Activated CD4-positive, alpha-beta memory T cell treated with anti-CD3 and anti-CD28 coated beads, Interleukin-2, amount 10 ng/mL, durations not matched to agents 7 days and 5 days (primary cell): ENCODE measurements at regions of chr3 and their contacts with region 1.

Region 1: GRCh38 chr3:101803173-101803782 is 24.3 kb downstream of the NXPE3 start:
- DNase-seq: peak; percentile 55
- H3K4me3 Mint-ChIP-seq: no peak overlapping the region
- H3K27ac Mint-ChIP-seq: peak overlapping the region; percentile 15
- H3K4me1 Mint-ChIP-seq: peaks cover 16% of the 10 kb centered on the region
- H3K27me3 Mint-ChIP-seq: no peaks in the 10 kb centered on the region

Region 2: DNA sequence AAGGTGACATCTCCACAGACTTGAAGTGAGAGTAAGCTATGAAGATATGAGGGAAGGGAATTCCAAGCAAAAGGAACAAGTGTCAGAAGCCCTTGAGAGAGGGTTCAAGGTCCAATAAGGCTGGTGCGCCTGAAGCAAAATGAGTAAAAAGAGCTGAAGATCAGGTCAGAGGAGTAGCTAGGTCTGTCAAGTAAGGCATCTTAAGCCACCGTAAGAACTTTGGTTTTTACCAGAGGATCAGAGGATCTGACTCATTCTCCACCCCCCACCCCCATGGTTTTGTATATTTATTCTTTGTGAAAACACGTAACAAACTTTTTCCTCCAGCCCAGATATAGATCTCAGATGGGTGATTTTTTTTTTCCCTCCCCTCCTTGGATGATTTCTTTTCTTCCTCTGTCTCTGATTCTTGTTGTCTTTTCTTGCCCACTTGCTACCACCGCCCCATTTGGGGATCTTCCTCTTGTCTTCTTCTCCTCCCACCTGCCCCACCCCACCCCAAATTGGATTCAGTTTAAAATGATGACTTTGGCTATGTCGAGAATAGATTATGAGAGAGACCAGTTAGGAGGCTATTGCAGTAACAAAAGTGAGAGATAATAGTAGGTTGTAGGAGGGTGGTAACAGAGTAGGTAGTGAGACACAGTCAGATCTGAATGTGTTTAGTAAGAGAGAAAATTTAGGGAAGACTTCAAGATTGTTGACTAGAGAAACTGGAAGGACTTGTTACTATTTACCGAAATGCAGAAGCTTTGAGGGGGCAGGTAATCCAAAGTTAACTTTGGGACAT is 235.6 kb before region 1 on chr3:
- CTCF ChIA-PET with region 1: no interaction called
- POLR2A ChIA-PET with region 1: no interaction called
- DNase-seq: peak; percentile 34
- H3K4me3 Mint-ChIP-seq: no peak overlapping the region
- H3K27ac Mint-ChIP-seq: peak overlapping the region; percentile 69
- H3K4me1 Mint-ChIP-seq: peaks cover 64% of the 10 kb centered on the region
- H3K27me3 Mint-ChIP-seq: no peaks in the 10 kb centered on the region

Region 3: DNA sequence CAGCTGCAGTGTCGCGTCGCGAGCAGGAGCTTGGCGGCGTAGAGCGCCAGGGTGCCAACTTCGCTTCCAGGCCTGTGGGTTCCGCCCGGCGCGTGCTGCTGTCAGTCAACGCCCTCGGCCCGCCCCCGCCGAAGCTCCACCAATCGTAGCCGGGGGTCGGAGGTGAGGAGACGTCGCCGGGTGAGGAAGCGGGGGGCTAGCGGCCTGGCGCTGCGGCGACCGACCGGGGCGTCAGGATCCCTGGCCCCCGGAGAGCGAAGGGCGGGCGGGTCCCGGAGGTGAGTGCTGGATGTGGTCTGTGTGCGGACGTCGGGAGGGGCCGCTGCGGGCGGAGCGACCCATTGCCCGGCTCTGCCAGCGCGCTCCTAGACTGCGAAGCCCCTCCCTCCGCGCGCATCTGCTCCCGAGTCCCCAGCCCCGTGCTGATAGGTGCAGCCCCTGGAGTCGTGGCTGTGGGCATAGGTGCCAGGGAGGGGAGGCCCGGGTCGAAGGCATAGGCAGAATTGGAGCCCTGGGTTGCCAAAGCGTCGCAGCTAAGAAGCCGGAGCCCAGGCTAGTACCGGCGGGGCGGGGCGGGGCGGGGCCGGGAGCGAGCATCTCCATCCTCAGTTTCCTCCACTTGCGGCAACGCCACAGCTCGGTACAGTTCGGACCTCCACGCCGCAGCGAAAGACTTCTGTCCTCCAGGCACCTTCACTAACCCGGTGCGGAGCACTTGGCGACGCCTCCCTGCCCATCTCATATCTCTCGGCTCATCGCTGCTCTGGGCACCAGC is 24.0 kb before region 1 on chr3 and contains the start of gene NXPE3:
- CTCF ChIA-PET with region 1: interaction called, 18 read pairs
- POLR2A ChIA-PET with region 1: no interaction called
- DNase-seq: peak; percentile 94
- H3K4me3 Mint-ChIP-seq: peak within 1 kb of the TSS; percentile 85
- H3K27ac Mint-ChIP-seq: peak within 1 kb of the TSS; percentile 87
- H3K4me1 Mint-ChIP-seq: peaks cover 46% of the 10 kb centered on the region
- H3K27me3 Mint-ChIP-seq: no peaks in the 10 kb centered on the region
- total RNA-seq, gene NXPE3: 22.4 to 23.6 TPM

Region 4: DNA sequence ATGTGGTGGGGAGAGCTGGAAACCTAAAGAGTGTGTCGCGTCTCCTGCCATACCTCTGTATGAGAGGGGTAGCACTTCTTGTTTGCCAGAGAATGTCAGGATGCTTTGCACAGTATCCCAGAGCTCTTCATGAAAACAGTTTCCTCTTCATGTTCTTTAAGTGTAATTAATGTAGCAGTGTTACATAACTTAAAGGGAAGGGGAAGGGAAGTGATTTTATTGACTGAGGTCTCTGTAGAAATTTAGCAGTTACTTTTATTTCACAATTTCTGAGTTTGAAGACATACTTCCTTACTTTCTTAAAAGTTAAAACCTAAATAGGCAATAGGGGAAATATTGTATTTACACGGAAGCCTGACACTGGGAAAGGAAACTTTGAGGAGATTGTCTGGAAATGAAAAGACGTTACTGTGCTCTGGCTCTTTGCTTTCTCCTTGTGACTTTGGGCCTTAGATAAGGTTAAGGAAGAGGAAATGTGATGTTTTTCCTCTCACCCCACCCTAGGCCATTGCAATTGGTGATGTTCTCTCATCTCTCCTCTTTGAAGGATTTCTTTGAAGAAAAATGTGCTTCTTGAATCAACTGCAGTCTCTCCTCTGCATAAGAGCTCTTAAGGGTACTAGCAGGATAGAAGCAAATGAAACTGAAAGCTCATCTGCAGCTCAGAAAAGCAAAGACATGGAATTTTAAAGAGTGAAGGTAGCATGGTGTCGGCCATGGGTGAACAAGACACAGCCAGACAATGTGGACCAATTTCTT is 18.2 kb before region 1 on chr3:
- CTCF ChIA-PET with region 1: interaction called, 18 read pairs
- POLR2A ChIA-PET with region 1: no interaction called
- DNase-seq: no peak
- H3K4me3 Mint-ChIP-seq: peak overlapping the region; percentile 23
- H3K27ac Mint-ChIP-seq: peak overlapping the region; percentile 69
- H3K4me1 Mint-ChIP-seq: peaks cover 50% of the 10 kb centered on the region
- H3K27me3 Mint-ChIP-seq: no peaks in the 10 kb centered on the region

Region 5: DNA sequence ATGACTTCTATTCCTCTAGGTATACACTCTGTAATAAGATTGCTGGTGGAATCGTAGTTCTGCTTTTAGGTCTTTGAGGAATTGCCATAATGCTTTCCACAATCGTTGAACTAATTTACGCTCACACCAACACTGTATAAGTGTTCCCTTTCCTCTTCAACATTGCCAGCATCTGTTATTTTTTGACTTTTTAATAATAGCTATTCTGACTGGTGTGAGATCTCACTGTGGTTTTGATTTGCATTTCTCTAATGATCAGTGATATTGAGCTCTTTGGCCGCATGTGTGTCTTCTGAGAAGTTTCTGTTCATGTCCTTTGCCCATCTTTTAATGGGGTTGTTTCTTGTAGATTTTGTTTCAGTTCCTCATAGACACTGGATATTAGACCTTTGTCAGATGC is 11.5 kb before region 1 on chr3:
- CTCF ChIA-PET with region 1: interaction called, 22 read pairs
- POLR2A ChIA-PET with region 1: no interaction called
- DNase-seq: no peak
- H3K4me3 Mint-ChIP-seq: no peak overlapping the region
- H3K27ac Mint-ChIP-seq: no peak overlapping the region
- H3K4me1 Mint-ChIP-seq: peaks cover 22% of the 10 kb centered on the region
- H3K27me3 Mint-ChIP-seq: no peaks in the 10 kb centered on the region

Region 6: DNA sequence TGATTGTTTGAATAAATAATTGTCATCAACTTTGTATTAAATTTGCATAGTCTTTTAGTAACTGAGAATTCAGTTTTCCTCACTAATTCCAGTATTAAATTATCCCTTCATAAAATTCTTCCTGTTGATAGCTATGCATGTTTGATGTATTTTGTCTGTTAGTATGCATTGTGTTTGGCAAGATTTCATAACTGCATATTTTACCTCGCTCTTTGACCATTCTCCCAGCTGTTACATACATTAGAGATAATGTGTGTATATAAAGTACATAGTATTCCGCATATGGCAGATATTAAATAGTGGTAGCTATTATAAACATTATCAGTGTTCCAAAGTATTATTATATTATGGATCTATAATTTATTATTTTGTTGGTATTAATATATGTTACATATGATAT is 35.4 kb after region 1 on chr3:
- CTCF ChIA-PET with region 1: no interaction called
- POLR2A ChIA-PET with region 1: no interaction called
- DNase-seq: no peak
- H3K4me3 Mint-ChIP-seq: no peak overlapping the region
- H3K27ac Mint-ChIP-seq: no peak overlapping the region
- H3K4me1 Mint-ChIP-seq: peaks cover 17% of the 10 kb centered on the region
- H3K27me3 Mint-ChIP-seq: no peaks in the 10 kb centered on the region

Region 7: GRCh38 chr3:101913173-101913572 is 109.9 kb after region 1 on chr3:
- CTCF ChIA-PET with region 1: no interaction called
- POLR2A ChIA-PET with region 1: no interaction called
- DNase-seq: no peak
- H3K4me3 Mint-ChIP-seq: no peak overlapping the region
- H3K27ac Mint-ChIP-seq: no peak overlapping the region
- H3K4me1 Mint-ChIP-seq: no peaks in the 10 kb centered on the region
- H3K27me3 Mint-ChIP-seq: peaks cover 12% of the 10 kb centered on the region

Region 8: DNA sequence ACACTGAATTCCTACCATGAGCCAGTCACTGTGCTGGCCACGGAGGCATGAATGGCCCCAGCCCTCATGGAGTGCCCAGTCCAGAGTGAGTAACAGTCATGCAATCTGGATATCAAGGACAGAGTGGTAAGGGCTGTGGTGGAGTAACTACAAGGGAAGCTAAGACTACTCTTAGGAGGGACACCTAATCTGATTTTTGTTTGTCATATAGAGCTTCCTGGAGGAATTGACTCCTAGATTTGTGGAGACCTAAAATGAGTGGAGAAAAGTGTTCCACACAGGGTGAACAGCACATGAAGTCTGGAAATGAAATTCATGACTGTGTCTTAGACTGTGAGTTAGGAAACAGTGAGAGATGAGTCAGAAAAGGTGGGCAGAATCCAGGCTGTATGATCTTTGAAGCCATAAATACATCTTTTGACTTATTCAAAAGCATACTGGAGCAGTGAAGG is 266.0 kb after region 1 on chr3:
- CTCF ChIA-PET with region 1: no interaction called
- POLR2A ChIA-PET with region 1: no interaction called
- DNase-seq: no peak
- H3K4me3 Mint-ChIP-seq: no peak overlapping the region
- H3K27ac Mint-ChIP-seq: no peak overlapping the region
- H3K4me1 Mint-ChIP-seq: peaks cover 4% of the 10 kb centered on the region
- H3K27me3 Mint-ChIP-seq: peaks cover 2% of the 10 kb centered on the region

Region 9: DNA sequence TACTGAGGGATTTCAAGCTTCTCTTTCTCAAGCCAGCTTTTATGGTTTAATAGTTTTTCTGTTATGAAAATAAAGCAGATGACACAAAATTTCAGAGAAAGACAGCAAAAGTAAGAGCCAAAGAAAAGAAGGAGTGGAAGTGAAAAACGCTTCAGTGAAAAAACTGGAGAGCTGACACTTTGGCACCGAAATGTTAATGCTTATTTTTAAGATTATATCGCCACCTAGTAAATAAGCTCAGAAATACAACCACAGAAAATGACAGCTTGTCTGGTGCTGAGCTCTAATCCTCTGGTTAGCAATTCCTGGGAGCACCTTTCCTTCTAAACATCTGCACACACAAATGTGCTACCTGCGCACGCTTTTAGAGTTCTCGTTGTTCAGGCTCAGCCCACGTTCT is 733.2 kb after region 1 on chr3:
- CTCF ChIA-PET with region 1: interaction called, 11 read pairs
- POLR2A ChIA-PET with region 1: no interaction called
- DNase-seq: no peak
- H3K4me3 Mint-ChIP-seq: no peak overlapping the region
- H3K27ac Mint-ChIP-seq: no peak overlapping the region
- H3K4me1 Mint-ChIP-seq: peaks cover 4% of the 10 kb centered on the region
- H3K27me3 Mint-ChIP-seq: peaks cover 6% of the 10 kb centered on the region